Ovary (tissue), 10 donors: ENCODE measurements at regions of chr18 and their contacts with region 1.

Region 1: GRCh38 chr18:8704361-8705279 is 736 bp upstream of the MTCL1 start:
- DNase-seq: peak; percentile 86 to 92 (median 90)
- H3K4me3 ChIP-seq: peak overlapping the region; percentile 52
- H3K27ac ChIP-seq: peak overlapping the region; percentile 84 to 85
- H3K4me1 ChIP-seq: peaks cover 4% of the 10 kb centered on the region
- H3K27me3 ChIP-seq: no peaks in the 10 kb centered on the region
- CTCF ChIP-seq: no peak
- EP300 ChIP-seq: no peak
- POLR2A ChIP-seq: peak; percentile 36

Region 2: DNA sequence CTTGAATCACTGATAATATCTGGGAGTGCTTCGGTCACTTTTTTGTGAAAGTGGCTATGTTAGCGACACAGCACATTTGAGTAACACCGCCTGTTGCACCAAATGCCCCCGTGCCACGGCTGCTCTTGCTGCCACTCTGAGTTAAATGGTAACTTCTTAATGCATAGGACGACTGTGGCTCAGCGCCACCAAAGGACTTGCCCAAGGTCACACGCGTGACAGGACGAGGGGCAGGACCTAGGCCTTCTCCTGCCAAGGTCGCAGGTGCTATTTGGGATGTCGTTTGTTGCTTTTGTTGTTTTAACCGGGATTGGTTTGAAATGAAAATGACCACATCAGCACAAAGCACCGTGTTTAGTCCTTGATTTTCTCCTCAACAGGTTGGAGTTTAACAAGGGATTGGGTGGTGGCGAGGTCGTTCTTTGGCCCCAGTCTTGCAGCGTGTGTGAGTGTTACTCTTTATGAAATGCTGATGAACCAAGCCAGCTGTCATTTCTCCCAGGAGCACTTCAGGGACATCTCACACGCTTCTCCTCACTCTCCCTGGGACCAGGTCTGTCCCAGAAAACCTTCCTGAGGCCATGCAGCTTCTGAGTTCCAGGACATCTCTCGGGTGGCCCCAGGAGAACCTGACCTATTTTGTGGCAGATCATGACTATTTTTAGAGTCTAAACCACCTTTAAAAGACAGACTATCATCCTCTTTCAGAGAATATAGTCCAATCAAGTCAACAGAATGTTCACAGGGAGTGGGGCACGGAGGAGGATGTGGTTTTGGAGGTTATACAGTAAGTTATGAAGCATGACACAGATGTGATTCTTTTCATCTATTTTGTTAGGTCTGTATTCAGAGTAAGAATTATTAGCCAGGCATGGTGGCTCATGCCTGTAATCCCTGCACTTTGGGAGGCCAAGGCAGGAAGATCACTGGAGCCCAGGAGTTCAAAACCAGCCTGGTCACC is 50.7 kb after region 1 on chr18:
- intact Hi-C with region 1: loop called in 1 of 4 experiments (anchors 10 kb)
- DNase-seq: no peak
- H3K4me3 ChIP-seq: no peak overlapping the region
- H3K27ac ChIP-seq: no peak overlapping the region
- H3K4me1 ChIP-seq: peaks cover 3% of the 10 kb centered on the region
- H3K27me3 ChIP-seq: no peaks in the 10 kb centered on the region
- CTCF ChIP-seq: no peak
- EP300 ChIP-seq: no peak
- POLR2A ChIP-seq: no peak

Region 3: DNA sequence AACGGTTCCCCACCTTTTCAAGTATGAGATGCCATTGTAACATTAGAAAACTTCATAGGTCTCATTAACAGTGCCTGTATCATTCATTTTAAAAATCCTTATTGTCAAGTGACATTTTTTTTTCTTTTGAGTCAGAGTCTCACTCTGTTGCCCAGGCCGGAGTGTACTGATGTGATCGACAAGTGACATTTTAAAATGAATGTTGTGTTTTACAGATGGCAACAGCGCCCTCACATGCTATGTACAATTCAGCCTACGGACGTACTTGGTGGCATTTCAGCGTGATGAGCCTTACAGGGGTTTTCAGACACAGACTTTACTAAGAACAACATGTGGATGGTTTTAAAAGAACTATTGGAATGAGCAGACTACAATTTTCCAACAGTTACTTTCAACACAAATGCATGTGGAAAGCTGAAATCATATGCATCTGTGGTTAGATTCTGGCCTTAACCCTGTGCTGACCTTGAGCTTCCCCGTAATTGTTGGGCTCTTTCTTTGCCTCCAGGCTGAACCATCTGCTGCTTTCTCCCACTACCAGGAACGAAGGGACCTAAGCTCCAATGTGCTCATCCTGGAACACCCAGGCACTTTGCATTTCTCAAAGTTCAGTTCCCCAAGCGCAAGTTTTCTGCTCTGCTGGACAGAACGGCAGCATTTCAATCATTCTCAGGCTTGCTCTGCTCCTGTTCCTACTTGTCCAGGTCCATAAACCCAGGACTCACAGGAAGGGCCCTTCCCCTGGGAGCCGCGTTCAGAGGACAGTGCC is 278.0 kb after region 1 on chr18:
- intact Hi-C with region 1: loop called in 2 of 4 experiments (anchors 5 kb)
- DNase-seq: no peak
- H3K4me3 ChIP-seq: no peak overlapping the region
- H3K27ac ChIP-seq: no peak overlapping the region
- H3K4me1 ChIP-seq: no peaks in the 10 kb centered on the region
- H3K27me3 ChIP-seq: no peaks in the 10 kb centered on the region
- CTCF ChIP-seq: no peak
- EP300 ChIP-seq: no peak
- POLR2A ChIP-seq: no peak

Region 4: GRCh38 chr18:8988261-8988871 is 283.7 kb after region 1 on chr18:
- intact Hi-C with region 1: loop called in 2 of 4 experiments (anchors 5 kb)
- DNase-seq: peak; percentile 27 to 60 (median 49)
- H3K4me3 ChIP-seq: no peak overlapping the region
- H3K27ac ChIP-seq: no peak overlapping the region
- H3K4me1 ChIP-seq: no peaks in the 10 kb centered on the region
- H3K27me3 ChIP-seq: no peaks in the 10 kb centered on the region
- CTCF ChIP-seq: peak; percentile 30 to 53 (median 36)
- EP300 ChIP-seq: no peak
- POLR2A ChIP-seq: no peak

Region 5: GRCh38 chr18:9038277-9038871 is 333.8 kb after region 1 on chr18:
- intact Hi-C with region 1: no loop called
- DNase-seq: no peak
- H3K4me3 ChIP-seq: no peak overlapping the region
- H3K27ac ChIP-seq: no peak overlapping the region
- H3K4me1 ChIP-seq: no peaks in the 10 kb centered on the region
- H3K27me3 ChIP-seq: no peaks in the 10 kb centered on the region
- CTCF ChIP-seq: no peak
- EP300 ChIP-seq: no peak
- POLR2A ChIP-seq: no peak